ENCODE measurements at regions of chr4 and their contacts with region 1.

Region 1: DNA sequence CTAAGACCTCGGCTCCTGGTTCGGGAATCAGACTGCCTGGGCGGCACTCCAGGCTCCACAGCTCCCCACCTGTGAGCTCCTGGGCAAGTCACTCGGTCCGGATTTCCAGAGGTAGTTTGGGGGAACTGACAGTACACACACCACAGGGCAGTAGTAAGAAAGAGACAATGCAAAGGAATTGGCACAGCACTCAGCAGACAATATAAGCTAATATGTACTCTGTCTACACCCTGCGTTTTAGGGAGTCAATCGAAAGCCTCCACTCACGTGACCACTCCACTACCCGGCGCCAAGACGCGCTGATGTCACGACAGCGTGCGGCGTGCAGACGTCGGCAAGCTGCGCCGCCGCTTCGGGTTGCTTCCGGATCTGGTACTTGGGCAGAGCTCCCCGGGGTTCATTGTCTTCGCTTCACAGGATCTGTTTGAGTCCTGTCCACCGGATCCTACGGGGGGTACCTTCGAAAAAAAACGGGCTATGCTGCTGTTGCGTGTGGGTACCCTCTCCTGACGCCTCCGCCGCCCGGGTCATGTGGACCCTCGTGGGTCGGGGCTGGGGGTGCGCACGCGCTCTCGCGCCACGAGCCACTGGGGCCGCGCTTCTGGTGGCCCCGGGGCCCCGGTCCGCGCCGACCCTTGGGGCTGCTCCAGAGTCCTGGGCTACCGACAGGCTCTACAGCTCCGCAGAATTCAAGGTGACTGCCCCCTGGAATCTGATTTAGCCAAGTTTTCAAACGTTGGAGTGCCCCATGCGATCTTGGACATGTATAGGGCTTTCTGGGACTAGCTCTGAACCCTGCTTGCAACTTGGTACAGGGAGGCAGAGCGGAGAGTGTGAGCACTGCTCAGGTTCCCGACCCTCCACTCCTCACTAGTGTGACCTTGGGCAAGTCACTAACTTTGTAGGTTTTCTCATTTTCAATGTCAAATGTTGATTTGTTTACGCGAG is at the start of gene GUF1:
- DNase-seq: peak; percentile 81 to 93 (median 91)
- ATAC-seq: peak; percentile 96
- H3K4me3 ChIP-seq: peak within 1 kb of the TSS; percentile 94
- H3K4me3 Mint-ChIP-seq: peak within 1 kb of the TSS; percentile 84 to 99 (median 98)
- H3K27ac ChIP-seq: peak within 1 kb of the TSS; percentile 98
- H3K27ac Mint-ChIP-seq: peak within 1 kb of the TSS; percentile 98 to 100 (median 99)
- H3K4me1 ChIP-seq: peaks cover 8 to 15% of the 10 kb centered on the region in 2 donors
- H3K4me1 Mint-ChIP-seq: peaks cover 9 to 56% (median 42%) of the 10 kb centered on the region in 7 donors
- H3K27me3 ChIP-seq: no peaks in the 10 kb centered on the region
- H3K27me3 Mint-ChIP-seq: peaks cover 0 to 2% (median 0%) of the 10 kb centered on the region in 5 donors
- total RNA-seq, gene GUF1: 15.5 to 26.0 (median 25.0) TPM

Region 2: GRCh38 chr4:44701037-44701436 is 22.7 kb after region 1 on chr4:
- CTCF ChIA-PET with region 1: no interaction called
- POLR2A ChIA-PET with region 1: interaction called, 5 read pairs
- intact Hi-C with region 1: loop called in 1 of 2 experiments (anchors 2 kb)
- DNase-seq: no peak
- ATAC-seq: no peak
- H3K4me3 ChIP-seq: no peak overlapping the region
- H3K4me3 Mint-ChIP-seq: no peak overlapping the region
- H3K27ac ChIP-seq: no peak overlapping the region
- H3K27ac Mint-ChIP-seq: peak overlapping the region in 3 of 9 donors; percentile 6 to 75 (median 57)
- H3K4me1 ChIP-seq: no peaks in the 10 kb centered on the region
- H3K4me1 Mint-ChIP-seq: peaks cover 0 to 6% (median 0%) of the 10 kb centered on the region in 7 donors
- H3K27me3 ChIP-seq: no peaks in the 10 kb centered on the region
- H3K27me3 Mint-ChIP-seq: no peaks in the 10 kb centered on the region

Region 3: DNA sequence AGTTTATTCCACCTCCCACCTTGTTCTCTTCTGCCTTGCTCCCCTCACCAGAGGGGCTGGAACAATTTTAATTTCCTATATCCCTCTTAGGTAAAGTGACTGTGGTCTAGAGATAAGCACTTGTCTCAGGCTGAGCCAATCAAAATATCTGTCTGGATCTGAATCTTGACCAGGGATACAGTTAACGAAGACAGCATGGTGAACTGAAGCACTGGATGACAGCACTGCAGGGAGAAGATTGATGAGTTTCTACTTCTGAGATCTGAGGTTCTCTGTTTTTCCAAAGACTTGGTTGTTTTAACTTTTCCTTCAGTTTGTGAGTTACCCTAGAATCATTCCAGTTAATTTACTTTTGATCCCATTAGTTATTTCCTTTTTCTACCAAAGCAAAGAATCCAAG is 34.8 kb after region 1 on chr4:
- CTCF ChIA-PET with region 1: no interaction called
- POLR2A ChIA-PET with region 1: interaction called, 10 read pairs
- intact Hi-C with region 1: no loop called
- DNase-seq: no peak
- ATAC-seq: no peak
- H3K4me3 ChIP-seq: no peak overlapping the region
- H3K4me3 Mint-ChIP-seq: no peak overlapping the region
- H3K27ac ChIP-seq: no peak overlapping the region
- H3K27ac Mint-ChIP-seq: peak overlapping the region in 1 of 9 donors; percentile 59
- H3K4me1 ChIP-seq: no peaks in the 10 kb centered on the region
- H3K4me1 Mint-ChIP-seq: peaks cover 0 to 36% (median 5%) of the 10 kb centered on the region in 7 donors
- H3K27me3 ChIP-seq: no peaks in the 10 kb centered on the region
- H3K27me3 Mint-ChIP-seq: no peaks in the 10 kb centered on the region

Region 4: GRCh38 chr4:44726262-44726871 is 48.0 kb after region 1 on chr4 and contains the start of gene GNPDA2:
- CTCF ChIA-PET with region 1: no interaction called
- POLR2A ChIA-PET with region 1: interaction called, 41 read pairs
- intact Hi-C with region 1: loop called (anchors 1 kb)
- DNase-seq: peak; percentile 68 to 82 (median 81)
- ATAC-seq: peak; percentile 93
- H3K4me3 ChIP-seq: peak within 1 kb of the TSS; percentile 73
- H3K4me3 Mint-ChIP-seq: peak within 1 kb of the TSS; percentile 79 to 97 (median 90)
- H3K27ac ChIP-seq: peak within 1 kb of the TSS; percentile 73
- H3K27ac Mint-ChIP-seq: peak within 1 kb of the TSS; percentile 80 to 95 (median 89)
- H3K4me1 ChIP-seq: peaks cover 13 to 18% of the 10 kb centered on the region in 2 donors
- H3K4me1 Mint-ChIP-seq: peaks cover 23 to 60% (median 51%) of the 10 kb centered on the region in 7 donors
- H3K27me3 ChIP-seq: no peaks in the 10 kb centered on the region
- H3K27me3 Mint-ChIP-seq: peaks cover 0 to 5% (median 0%) of the 10 kb centered on the region in 5 donors
- total RNA-seq, gene GNPDA2: 6.8 to 14.8 (median 12.9) TPM

Measured in naive thymus-derived CD4-positive, alpha-beta T cell (primary cell).